Activated B cell treated with CpG ODN at 0.5 μM for 24 hours (primary cell): ENCODE measurements at regions of chr11 and their contacts with region 1.

Region 1: GRCh38 chr11:102341844-102342318 is 5.1 kb upstream of the BIRC2 start:
- DNase-seq: no peak
- ATAC-seq: peak; percentile 37
- H3K4me3 Mint-ChIP-seq: no peak overlapping the region
- H3K27ac Mint-ChIP-seq: peak overlapping the region; percentile 42
- H3K4me1 Mint-ChIP-seq: peaks cover 29% of the 10 kb centered on the region
- H3K27me3 Mint-ChIP-seq: no peaks in the 10 kb centered on the region
- CTCF ChIP-seq: peak; percentile 50

Region 2: GRCh38 chr11:102367364-102367763 is 25.5 kb after region 1 on chr11:
- CTCF ChIA-PET with region 1: interaction called, 11 read pairs
- POLR2A ChIA-PET with region 1: no interaction called
- intact Hi-C with region 1: no loop called
- DNase-seq: no peak
- ATAC-seq: no peak
- H3K4me3 Mint-ChIP-seq: no peak overlapping the region
- H3K27ac Mint-ChIP-seq: peak overlapping the region; percentile 21
- H3K4me1 Mint-ChIP-seq: peaks cover 14% of the 10 kb centered on the region
- H3K27me3 Mint-ChIP-seq: no peaks in the 10 kb centered on the region
- CTCF ChIP-seq: no peak

Region 3: GRCh38 chr11:102630598-102631448 is 288.9 kb after region 1 on chr11:
- CTCF ChIA-PET with region 1: no interaction called
- POLR2A ChIA-PET with region 1: no interaction called
- intact Hi-C with region 1: no loop called
- DNase-seq: no peak
- ATAC-seq: no peak
- H3K4me3 Mint-ChIP-seq: no peak overlapping the region
- H3K27ac Mint-ChIP-seq: no peak overlapping the region
- H3K4me1 Mint-ChIP-seq: no peaks in the 10 kb centered on the region
- H3K27me3 Mint-ChIP-seq: peaks cover 8% of the 10 kb centered on the region
- CTCF ChIP-seq: no peak